Endothelial cell of umbilical vein (primary cell): ENCODE measurements at regions of chr22 and their contacts with region 1.

Region 1: DNA sequence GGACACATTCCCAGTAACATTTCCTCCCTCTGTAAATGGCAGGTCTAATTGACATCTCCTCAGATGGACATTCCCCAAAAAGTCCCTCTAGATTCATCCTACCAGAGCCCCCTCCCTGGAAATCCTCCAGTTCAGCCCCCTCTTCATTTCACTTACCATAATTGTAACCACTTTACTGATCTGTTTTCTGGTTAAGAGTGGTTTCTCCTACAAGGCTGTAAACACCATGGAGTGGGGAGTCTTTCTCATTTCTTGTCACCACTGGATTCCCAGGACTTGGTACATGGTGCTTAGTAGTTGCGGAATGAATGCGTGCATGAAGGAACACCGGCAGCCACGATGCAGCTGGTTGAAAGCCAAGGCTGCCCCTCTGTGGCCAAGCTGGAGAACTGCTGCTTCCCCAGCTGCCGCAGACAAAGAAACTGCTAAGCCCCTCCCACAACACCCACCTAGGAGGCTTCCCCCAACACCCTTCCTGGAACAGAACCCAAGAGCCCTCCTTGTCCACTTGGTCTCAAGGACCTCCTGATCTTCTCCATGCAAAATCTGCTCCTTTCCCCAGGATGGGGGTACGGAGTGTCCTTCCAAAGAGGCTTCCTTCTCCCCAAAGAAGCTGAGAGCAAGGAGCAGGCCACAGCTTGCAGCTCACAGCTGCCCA is 18.6 kb upstream of the SCARF2 start:
- DNase-seq: peak; percentile 86
- H3K4me3 ChIP-seq: no peak overlapping the region
- H3K27ac ChIP-seq: no peak overlapping the region
- H3K4me1 ChIP-seq: no peaks in the 10 kb centered on the region
- H3K27me3 ChIP-seq: no peaks in the 10 kb centered on the region
- CTCF ChIP-seq: peak; percentile 88 to 96
- POLR2A ChIP-seq: no peak

Region 2: DNA sequence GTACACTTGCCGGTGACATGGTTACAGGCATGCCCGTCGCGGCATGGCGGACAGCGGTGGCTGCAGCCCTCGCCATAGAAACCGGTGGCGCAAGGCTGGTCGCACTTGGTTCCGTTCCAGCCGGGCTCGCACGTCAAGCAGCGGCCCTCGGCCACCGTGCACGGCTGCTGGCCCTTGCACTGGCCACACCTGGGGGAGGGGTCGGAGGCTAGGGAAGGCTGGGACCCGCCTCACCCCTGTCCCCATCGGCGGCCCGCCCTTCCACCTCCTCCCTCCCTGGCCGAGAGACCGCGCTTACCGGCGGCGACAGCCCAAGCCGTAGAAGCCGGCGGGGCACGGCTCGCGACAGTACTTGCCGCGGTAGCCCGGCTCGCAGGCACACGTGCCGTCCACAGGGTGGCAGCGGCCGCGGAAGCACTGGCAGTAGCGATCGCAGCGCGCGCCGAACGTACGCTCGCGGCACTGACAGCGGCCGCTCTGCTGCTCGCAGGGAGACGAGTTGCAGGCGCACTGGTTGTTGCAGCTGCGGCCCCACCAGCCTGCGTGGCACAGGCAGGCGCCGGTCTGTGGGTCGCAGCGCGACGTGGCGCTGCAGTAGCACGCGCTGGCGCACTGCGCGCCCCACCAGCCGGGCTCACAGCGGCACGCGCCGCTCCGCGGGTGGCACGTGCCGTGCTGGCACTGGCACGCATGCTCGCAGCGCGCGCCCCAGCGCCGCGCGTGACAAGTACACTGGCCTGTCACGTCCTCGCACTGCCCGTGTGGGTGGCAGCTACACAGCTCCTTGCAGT is 25.3 kb before region 1 on chr22:
- CTCF ChIA-PET with region 1: interaction called, 15 read pairs
- POLR2A ChIA-PET with region 1: no interaction called
- dilution Hi-C with region 1: no loop called
- intact Hi-C with region 1: loop called (anchors 1 kb)
- DNase-seq: peak; percentile 44
- H3K4me3 ChIP-seq: peak overlapping the region in 1 of 3 experiments; percentile 9
- H3K27ac ChIP-seq: no peak overlapping the region
- H3K4me1 ChIP-seq: peaks cover 5% of the 10 kb centered on the region
- H3K27me3 ChIP-seq: no peaks in the 10 kb centered on the region
- CTCF ChIP-seq: peak; percentile 40 to 74
- POLR2A ChIP-seq: no peak

Region 3: GRCh38 chr22:20437613-20438426 is 18.4 kb before region 1 on chr22 and contains the start of gene SCARF2:
- CTCF ChIA-PET with region 1: interaction called, 22 read pairs
- POLR2A ChIA-PET with region 1: no interaction called
- dilution Hi-C with region 1: no loop called
- intact Hi-C with region 1: no loop called
- DNase-seq: peak; percentile 52
- H3K4me3 ChIP-seq: peak within 1 kb of the TSS; percentile 43 to 75 (median 59)
- H3K27ac ChIP-seq: peak within 1 kb of the TSS; percentile 4
- H3K4me1 ChIP-seq: peaks cover 11% of the 10 kb centered on the region
- H3K27me3 ChIP-seq: no peaks in the 10 kb centered on the region
- CTCF ChIP-seq: no peak
- POLR2A ChIP-seq: no peak
- total RNA-seq, gene SCARF2: 18.4 and 20.1 TPM in 2 replicates

Region 4: GRCh38 chr22:20495861-20496681 is 39.9 kb after region 1 on chr22:
- CTCF ChIA-PET with region 1: interaction called, 6 read pairs
- POLR2A ChIA-PET with region 1: no interaction called
- dilution Hi-C with region 1: no loop called
- intact Hi-C with region 1: loop called (anchors 1 kb)
- DNase-seq: peak; percentile 91
- H3K4me3 ChIP-seq: peak overlapping the region; percentile 62 to 77 (median 74)
- H3K27ac ChIP-seq: peak overlapping the region; percentile 85
- H3K4me1 ChIP-seq: peaks cover 12% of the 10 kb centered on the region
- H3K27me3 ChIP-seq: no peaks in the 10 kb centered on the region
- CTCF ChIP-seq: peak; percentile 87 to 91
- POLR2A ChIP-seq: peak; percentile 93